ENCODE measurements at regions of chr9 and their contacts with region 1.

Region 1: DNA sequence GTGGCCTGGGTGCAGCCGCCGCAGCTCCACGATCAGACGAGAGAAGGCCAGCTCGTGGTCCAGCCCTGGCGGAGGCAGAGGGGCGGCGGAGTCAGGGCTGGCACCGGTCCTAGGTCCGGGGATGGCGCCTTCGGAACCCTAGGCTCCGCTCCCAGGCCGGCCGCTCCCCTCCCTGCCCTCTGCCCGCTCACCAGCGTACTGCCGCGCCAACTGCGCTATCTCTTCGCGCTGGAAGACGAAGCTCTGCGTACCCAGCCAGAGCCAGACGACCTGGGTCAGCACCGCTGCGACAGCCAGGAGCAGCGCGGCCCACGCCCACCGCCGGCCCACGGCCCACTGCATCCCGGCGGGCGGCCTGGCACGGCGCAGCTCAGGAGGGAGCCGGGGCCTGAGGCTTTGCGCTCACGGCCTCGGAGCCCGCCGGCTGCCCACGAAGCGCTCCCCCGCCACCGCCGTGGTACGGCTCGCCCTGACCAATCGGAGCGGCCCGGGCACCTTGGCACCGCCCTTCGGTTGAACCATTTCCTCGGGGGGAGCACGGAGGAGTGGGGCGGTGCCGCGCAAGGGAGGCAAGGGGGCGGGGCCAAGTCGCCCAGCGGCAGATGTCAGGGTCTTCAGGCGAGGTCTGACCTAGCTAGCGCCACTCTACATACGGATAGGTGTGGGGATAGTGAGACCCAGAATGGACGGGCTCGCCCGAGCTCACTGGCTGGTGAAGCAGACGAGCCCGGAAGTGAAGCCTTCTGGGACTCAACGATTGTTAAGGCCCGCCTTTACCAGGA is at the start of gene SIGMAR1:
- DNase-seq: peak; percentile 51
- ATAC-seq: peak; percentile 94
- H3K4me3 ChIP-seq: peak within 1 kb of the TSS; percentile 70 to 94
- H3K27ac ChIP-seq: peak within 1 kb of the TSS; percentile 98
- H3K4me1 ChIP-seq: peaks cover 13% of the 10 kb centered on the region
- H3K27me3 ChIP-seq: no peaks in the 10 kb centered on the region
- CTCF ChIP-seq: no peak
- total RNA-seq, gene SIGMAR1: 131 TPM

Region 2: GRCh38 chr9:33964086-33964768 is 673.3 kb before region 1 on chr9:
- CTCF ChIA-PET with region 1: no interaction called
- POLR2A ChIA-PET with region 1: interaction called, 10 read pairs
- in situ Hi-C with region 1: no loop called
- intact Hi-C with region 1: no loop called
- DNase-seq: no peak
- ATAC-seq: peak; percentile 53; the same call in 1 of the 2 replicates
- H3K4me3 ChIP-seq: no peak overlapping the region
- H3K27ac ChIP-seq: no peak overlapping the region
- H3K4me1 ChIP-seq: 0 out of 2 replicates have a peak, but pooled peaks cover 3% of the 10 kb centered on the region
- H3K27me3 ChIP-seq: no peaks in the 10 kb centered on the region
- CTCF ChIP-seq: no peak

Region 3: GRCh38 chr9:34612631-34613390 is 24.7 kb before region 1 on chr9:
- CTCF ChIA-PET with region 1: interaction called, 8 read pairs
- POLR2A ChIA-PET with region 1: interaction called, 9 read pairs
- in situ Hi-C with region 1: no loop called
- intact Hi-C with region 1: loop called (anchors 1 kb)
- DNase-seq: no peak
- ATAC-seq: peak; percentile 81
- H3K4me3 ChIP-seq: peak overlapping the region; percentile 68 to 80
- H3K27ac ChIP-seq: peak overlapping the region; percentile 96
- H3K4me1 ChIP-seq: peaks cover 16% of the 10 kb centered on the region
- H3K27me3 ChIP-seq: no peaks in the 10 kb centered on the region
- CTCF ChIP-seq: peak; percentile 96

Region 4: DNA sequence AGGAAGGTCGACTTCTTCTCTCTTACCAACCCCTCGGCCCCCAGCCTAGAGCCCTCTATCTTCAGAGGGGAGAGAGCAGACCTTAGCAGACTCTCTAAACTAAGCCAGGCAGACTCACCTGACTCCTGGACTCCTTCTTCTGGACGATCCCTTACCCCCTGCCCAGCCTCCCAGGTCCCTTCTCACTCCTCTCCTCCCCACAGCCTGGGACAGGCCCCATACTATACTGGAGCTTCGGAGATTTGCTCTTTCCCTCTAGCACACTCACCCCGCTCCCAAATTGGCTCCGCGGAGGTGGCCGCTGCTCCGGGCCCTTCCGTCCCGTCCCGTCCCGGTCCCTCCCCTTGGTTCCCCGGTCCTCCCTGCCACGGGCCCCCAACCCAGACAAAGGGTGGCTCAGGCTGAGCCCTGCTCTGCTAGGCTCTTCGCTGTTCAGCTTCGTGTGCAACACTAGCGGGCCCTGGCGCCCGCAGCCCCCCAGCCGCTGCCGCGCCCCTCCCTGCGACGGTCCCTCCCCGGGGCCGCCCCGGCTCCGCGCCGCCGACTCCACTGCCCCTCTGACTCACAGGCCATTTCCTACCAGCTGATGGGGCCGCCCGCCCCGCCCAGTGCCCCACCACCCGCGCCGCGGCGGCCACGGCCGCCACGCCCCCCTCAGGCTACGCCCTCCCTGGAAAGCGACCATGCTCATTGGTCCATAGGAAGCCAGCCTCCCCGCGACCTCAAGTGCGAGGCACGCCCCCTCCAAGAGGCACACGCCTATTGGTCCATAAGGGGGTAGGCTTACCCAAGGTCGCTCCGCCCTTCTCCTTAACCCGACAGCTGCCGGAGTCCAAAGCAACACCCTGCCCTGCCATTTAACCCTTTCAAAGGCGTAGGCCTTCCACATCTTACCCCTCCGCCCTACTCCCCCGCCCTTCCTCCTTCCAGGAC is 473.7 kb after region 1 on chr9:
- CTCF ChIA-PET with region 1: no interaction called
- POLR2A ChIA-PET with region 1: no interaction called
- in situ Hi-C with region 1: no loop called
- intact Hi-C with region 1: no loop called
- DNase-seq: peak; percentile 92
- ATAC-seq: peak; percentile 86
- H3K4me3 ChIP-seq: peak overlapping the region; percentile 82 to 95
- H3K27ac ChIP-seq: peak overlapping the region; percentile 97
- H3K4me1 ChIP-seq: peaks cover 39% of the 10 kb centered on the region
- H3K27me3 ChIP-seq: no peaks in the 10 kb centered on the region
- CTCF ChIP-seq: no peak